Heart left ventricle (tissue), 16 donors: ENCODE measurements at regions of chr2 and their contacts with region 1.

Region 1: GRCh38 chr2:130372055-130372832 is 16.4 kb downstream of the PTPN18 start:
- DNase-seq: peak; percentile 91 to 97 (median 94)
- ATAC-seq: peak; percentile 85 to 96 (median 95)
- H3K4me3 ChIP-seq: peak overlapping the region; percentile 57 to 95 (median 86)
- H3K27ac ChIP-seq: peak overlapping the region; percentile 84 to 96 (median 90)
- H3K4me1 ChIP-seq: peaks cover 0 to 74% (median 18%) of the 10 kb centered on the region in 12 donors
- H3K27me3 ChIP-seq: no peaks in the 10 kb centered on the region
- CTCF ChIP-seq: peak; percentile 77 to 97 (median 92)
- POLR2A ChIP-seq: peak in 1 of 2 donors; percentile 54

Region 2: DNA sequence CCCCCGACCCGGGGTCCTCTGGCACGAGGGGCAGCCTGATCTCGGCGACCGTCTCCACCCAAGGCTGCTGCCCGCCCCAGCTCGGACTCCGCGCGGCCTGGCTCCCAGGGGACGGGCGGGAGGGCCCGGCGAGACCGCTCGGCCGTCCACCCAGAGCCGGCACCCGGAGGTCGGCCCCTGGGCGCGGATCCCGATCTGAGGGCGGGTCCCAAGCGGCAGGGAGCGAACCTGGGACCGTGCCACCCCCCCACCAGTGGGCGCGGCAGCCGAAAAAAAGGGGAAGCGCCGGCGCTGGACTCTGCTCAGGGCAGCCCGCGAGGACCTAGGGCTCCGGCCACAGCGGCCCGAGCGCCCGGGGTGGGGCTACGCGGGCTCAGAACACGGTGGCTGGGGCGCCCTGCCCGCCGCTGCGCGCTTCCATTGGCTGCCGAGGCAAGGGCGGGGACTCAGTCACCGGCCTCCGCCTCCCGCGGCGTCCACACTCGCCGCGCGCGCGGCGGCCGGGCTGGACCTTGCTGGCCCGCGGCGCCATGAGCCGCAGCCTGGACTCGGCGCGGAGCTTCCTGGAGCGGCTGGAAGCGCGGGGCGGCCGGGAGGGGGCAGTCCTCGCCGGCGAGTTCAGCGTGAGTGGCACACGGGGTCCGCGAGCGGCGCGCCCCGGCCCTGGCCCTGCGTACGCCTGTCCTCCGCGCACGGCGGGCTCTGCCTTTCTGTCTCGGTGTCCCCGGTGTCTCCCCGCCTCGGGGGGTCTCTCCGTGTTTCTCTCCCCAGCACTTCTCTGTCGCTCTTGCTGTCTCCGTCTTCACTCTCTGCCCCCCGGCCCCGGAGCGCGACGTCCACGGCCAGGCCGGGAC is 16.4 kb before region 1 on chr2 and contains the start of gene PTPN18:
- intact Hi-C with region 1: loop called in 1 of 10 experiments (anchors 1 kb)
- DNase-seq: peak; percentile 91 to 97 (median 94)
- ATAC-seq: peak; percentile 95 to 98 (median 98)
- H3K4me3 ChIP-seq: peak within 1 kb of the TSS; percentile 57 to 91 (median 84)
- H3K27ac ChIP-seq: peak within 1 kb of the TSS; percentile 78 to 96 (median 86)
- H3K4me1 ChIP-seq: peaks cover 0 to 44% (median 22%) of the 10 kb centered on the region in 12 donors
- H3K27me3 ChIP-seq: no peaks in the 10 kb centered on the region
- CTCF ChIP-seq: peak; percentile 25 to 80 (median 65)
- POLR2A ChIP-seq: peak in 1 of 2 donors; percentile 93
- total RNA-seq, gene PTPN18: 9.7 to 42.5 (median 11.1) TPM

Region 3: GRCh38 chr2:130385709-130386108 is 13.5 kb after region 1 on chr2:
- intact Hi-C with region 1: loop called in 2 of 10 experiments (anchors 2 kb)
- DNase-seq: no peak
- ATAC-seq: peak in 2 of 4 donors; percentile 19 to 51
- H3K4me3 ChIP-seq: no peak overlapping the region
- H3K27ac ChIP-seq: peak overlapping the region in 10 of 12 donors; percentile 55 to 84 (median 72)
- H3K4me1 ChIP-seq: peaks cover 0 to 58% (median 41%) of the 10 kb centered on the region in 12 donors
- H3K27me3 ChIP-seq: no peaks in the 10 kb centered on the region
- CTCF ChIP-seq: no peak
- POLR2A ChIP-seq: no peak

Region 4: DNA sequence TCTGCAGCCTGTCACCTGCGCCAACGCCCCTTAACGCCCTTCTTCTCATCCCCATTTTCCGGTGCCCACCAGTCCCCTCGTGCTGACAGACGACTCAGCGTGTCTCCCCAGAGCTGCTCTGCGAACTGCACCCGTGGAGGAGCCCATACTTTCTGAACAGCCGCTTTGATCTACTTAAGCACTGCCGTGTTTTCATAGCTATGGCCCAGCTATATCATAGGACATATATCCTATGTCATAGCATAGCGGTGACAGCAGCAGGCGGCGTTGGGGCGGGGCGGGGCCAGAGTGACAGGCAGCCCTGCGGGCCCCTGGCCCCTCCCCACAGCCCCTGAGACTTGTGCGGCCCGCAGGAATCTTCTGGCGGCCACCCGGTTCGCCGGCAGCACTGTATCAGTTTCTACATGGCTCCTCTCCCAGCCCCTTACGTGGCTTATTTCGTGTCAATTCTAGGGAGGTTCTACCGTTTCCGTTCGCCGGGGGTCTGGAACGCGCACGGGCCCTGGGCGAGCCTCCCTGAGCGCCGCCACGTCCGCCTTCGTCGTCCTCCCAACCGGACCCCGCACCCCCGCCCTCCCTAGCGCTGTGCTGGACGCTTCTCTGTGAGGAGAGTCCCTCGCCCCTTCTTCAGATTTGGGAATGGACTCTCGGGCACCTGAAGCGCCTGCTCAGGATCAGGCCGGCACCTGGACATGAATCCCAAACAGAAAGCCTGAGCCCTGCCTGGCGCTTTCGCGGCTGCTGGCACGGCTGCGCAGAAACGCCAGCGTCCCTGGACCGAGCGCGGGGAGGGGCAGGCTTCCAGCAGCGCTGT is 19.0 kb after region 1 on chr2:
- intact Hi-C with region 1: loop called in 4 of 10 experiments (anchors 1 to 2 kb)
- DNase-seq: peak; percentile 82 to 91 (median 82)
- ATAC-seq: peak; percentile 67 to 92 (median 88)
- H3K4me3 ChIP-seq: peak overlapping the region; percentile 36 to 84 (median 74)
- H3K27ac ChIP-seq: peak overlapping the region; percentile 79 to 94 (median 89)
- H3K4me1 ChIP-seq: peaks cover 0 to 52% (median 34%) of the 10 kb centered on the region in 12 donors
- H3K27me3 ChIP-seq: no peaks in the 10 kb centered on the region
- CTCF ChIP-seq: peak in 3 of 12 donors; percentile 3 to 18 (median 8)
- POLR2A ChIP-seq: peak in 1 of 2 donors; percentile 32